CD4-positive, alpha-beta memory T cell (primary cell): ENCODE measurements at regions of chr4 and their contacts with region 1.

Region 1: DNA sequence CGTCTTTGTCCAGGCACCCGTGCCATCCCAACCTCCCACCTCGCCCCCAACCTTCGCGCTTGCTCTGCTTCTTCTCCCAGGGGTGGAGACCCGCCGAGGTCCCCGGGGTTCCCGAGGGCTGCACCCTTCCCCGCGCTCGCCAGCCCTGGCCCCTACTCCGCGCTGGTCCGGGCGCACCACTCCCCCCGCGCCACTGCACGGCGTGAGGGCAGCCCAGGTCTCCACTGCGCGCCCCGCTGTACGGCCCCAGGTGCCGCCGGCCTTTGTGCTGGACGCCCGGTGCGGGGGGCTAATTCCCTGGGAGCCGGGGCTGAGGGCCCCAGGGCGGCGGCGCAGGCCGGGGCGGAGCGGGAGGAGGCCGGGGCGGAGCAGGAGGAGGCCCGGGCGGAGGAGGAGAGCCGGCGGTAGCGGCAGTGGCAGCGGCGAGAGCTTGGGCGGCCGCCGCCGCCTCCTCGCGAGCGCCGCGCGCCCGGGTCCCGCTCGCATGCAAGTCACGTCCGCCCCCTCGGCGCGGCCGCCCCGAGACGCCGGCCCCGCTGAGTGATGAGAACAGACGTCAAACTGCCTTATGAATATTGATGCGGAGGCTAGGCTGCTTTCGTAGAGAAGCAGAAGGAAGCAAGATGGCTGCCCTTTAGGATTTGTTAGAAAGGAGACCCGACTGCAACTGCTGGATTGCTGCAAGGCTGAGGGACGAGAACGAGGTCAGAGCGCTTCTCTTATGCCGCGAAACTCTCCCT is at the start of gene TET2:
- DNase-seq: peak; percentile 79 to 88 (median 83)
- H3K4me3 ChIP-seq: peak within 1 kb of the TSS; percentile 100
- H3K4me3 Mint-ChIP-seq: peak within 1 kb of the TSS; percentile 97 to 100 (median 100)
- H3K27ac ChIP-seq: peak within 1 kb of the TSS; percentile 81
- H3K27ac Mint-ChIP-seq: peak within 1 kb of the TSS; percentile 97 to 100 (median 99)
- H3K4me1 ChIP-seq: peaks cover 27% of the 10 kb centered on the region
- H3K4me1 Mint-ChIP-seq: peaks cover 22 to 53% (median 33%) of the 10 kb centered on the region in 4 donors
- H3K27me3 ChIP-seq: no peaks in the 10 kb centered on the region
- H3K27me3 Mint-ChIP-seq: no peaks in the 10 kb centered on the region
- total RNA-seq, gene TET2: 20.2 to 20.7 TPM

Region 2: DNA sequence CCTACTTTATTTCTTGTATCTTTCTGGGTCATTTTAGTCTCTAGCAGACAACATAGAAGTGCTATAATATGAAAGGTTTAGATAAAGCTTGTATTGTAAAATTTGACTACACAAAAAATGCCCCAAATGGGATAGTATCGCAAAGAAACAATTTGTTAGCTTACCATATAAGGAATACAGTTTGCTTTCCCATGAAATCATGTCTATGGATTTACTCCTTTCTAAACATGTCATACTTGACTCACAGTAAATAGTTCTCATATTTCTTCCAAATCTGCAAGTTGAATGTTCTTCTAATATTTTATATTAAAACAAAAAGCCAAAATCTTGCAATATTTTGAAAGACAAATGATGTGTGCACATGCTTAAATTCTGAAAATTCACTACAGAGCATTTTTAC is 223.5 kb after region 1 on chr4:
- CTCF ChIA-PET with region 1: no interaction called
- POLR2A ChIA-PET with region 1: no interaction called
- intact Hi-C with region 1: loop called (anchors 10 kb)
- DNase-seq: no peak
- H3K4me3 ChIP-seq: no peak overlapping the region
- H3K4me3 Mint-ChIP-seq: no peak overlapping the region
- H3K27ac ChIP-seq: no peak overlapping the region
- H3K27ac Mint-ChIP-seq: no peak overlapping the region
- H3K4me1 ChIP-seq: no peaks in the 10 kb centered on the region
- H3K4me1 Mint-ChIP-seq: peaks cover 0 to under 1% (median 0%) of the 10 kb centered on the region in 4 donors
- H3K27me3 ChIP-seq: no peaks in the 10 kb centered on the region
- H3K27me3 Mint-ChIP-seq: no peaks in the 10 kb centered on the region

Region 3: DNA sequence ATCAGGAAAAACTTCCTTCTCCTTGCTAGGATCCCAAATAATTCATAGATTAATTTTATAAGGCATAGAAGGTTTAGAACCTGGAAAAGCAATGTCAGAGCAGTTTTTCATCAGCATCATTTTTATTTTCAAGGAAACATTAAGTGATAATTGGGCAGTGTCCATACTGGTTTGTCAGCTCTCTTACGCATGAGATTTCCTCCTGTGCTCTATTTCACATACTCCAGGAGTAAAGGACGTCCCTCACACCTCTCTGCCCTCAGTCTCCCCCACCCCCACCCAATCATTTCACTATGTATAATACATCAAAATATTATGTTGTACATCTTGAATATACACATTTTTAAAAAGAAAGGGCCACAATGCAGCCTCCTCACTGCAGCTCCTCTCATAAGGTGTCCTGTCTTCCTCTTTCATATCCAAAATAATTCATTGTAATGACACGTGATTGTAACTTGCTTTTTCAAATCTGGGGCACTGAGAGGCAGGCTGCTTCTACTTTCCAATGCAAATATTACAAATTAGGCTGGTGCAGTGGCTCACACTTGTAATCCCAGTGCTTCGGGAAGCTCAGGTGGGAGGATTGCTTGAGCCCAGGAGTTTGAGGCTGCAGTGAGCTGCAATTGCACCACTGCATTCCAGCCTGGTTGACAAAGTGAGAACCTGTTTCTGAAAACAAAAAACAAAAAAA is 440.3 kb after region 1 on chr4:
- CTCF ChIA-PET with region 1: no interaction called
- POLR2A ChIA-PET with region 1: no interaction called
- intact Hi-C with region 1: no loop called
- DNase-seq: no peak
- H3K4me3 ChIP-seq: no peak overlapping the region
- H3K4me3 Mint-ChIP-seq: no peak overlapping the region
- H3K27ac ChIP-seq: no peak overlapping the region
- H3K27ac Mint-ChIP-seq: no peak overlapping the region
- H3K4me1 ChIP-seq: no peaks in the 10 kb centered on the region
- H3K4me1 Mint-ChIP-seq: peaks cover 0 to 1% (median 0%) of the 10 kb centered on the region in 4 donors
- H3K27me3 ChIP-seq: peaks cover 4% of the 10 kb centered on the region
- H3K27me3 Mint-ChIP-seq: peaks cover 4 to 9% of the 10 kb centered on the region in 2 donors